ENCODE measurements at regions of chr9 and their contacts with region 1.

Region 1: GRCh38 chr9:91949946-91950664 is at the start of gene ROR2:
- DNase-seq: peak; percentile 96
- H3K4me3 ChIP-seq: peak within 1 kb of the TSS; percentile 35 to 58
- H3K27ac ChIP-seq: peak within 1 kb of the TSS in 1 of 2 experiments; percentile 79; a peak in 1 of 4 replicates
- H3K4me1 ChIP-seq: peaks cover 0 to 15% of the 10 kb centered on the region in 2 experiments; a peak in 2 of 4 replicates
- H3K27me3 ChIP-seq: peaks cover 33% of the 10 kb centered on the region
- CTCF ChIP-seq: peak; percentile 43
- EP300 ChIP-seq: no peak
- RAD21 ChIP-seq: peak; percentile 67
- polyA plus RNA-seq, gene ROR2: 0.34 and 0.43 TPM in 2 replicates

Region 2: DNA sequence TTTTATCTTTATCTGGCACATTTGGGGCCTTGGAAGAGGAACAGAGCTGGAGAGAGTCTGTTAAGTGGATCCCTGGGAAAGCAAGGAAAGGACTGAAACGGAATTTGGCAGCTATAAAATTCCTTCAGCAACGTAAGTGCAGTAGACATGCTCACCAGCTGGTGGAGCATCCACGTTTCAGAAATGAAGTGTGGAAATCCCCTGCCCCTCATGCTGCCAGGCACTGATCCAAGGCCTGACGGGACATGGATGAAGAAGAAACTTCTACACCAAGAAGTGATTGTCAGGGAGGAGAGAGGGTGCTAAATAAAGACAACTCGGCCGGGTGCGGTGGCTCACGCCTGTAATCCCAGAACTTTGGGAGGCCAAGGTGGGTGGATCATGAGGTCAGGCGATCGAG is 209.4 kb before region 1 on chr9:
- CTCF ChIA-PET with region 1: interaction called, 48 read pairs
- POLR2A ChIA-PET with region 1: no interaction called
- DNase-seq: no peak
- H3K4me3 ChIP-seq: no peak overlapping the region
- H3K27ac ChIP-seq: no peak overlapping the region
- H3K4me1 ChIP-seq: peaks cover 0 to 15% of the 10 kb centered on the region in 2 experiments; a peak in 2 of 4 replicates
- H3K27me3 ChIP-seq: peaks cover 10% of the 10 kb centered on the region; the same call in 1 of the 2 replicates
- CTCF ChIP-seq: no peak
- EP300 ChIP-seq: no peak
- RAD21 ChIP-seq: 0 out of 2 replicates have a peak, but pooled peaks have one; percentile 6

Region 3: DNA sequence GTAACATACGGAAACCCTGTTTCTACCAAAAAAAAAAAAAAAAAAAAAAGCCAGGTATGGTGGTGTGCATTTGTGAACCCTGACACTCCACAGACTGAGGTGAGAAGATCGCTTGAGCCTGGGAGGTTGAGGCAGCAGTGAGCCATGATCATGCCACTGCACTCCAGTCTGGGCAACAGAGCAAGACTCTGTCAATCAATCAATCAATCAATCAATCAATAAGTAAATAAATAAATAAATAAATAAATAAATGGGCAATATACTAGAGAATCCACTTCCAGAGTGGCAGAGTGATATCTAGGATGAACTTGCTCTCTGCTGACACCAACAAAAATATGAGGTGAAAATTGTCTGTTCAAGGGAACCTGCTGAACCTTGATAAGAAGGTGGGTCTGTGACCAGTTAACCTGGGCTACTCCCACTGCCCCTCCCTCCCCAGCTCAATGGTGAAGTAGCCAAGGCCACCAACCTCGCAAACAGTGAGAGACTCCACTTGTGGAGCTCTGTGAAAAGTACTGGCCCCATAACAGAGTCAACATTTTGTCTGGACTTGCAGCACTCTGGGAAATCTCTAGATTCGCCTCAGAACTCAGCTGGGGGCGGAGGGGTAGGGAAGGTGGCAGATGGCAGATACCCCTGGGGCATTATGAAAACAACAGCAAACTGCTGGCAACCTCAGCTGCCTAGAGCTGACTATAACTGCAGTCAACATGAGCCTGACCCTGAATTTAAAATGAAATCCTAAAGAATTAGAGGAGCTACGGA is 163.8 kb before region 1 on chr9:
- CTCF ChIA-PET with region 1: interaction called, 495 read pairs
- POLR2A ChIA-PET with region 1: no interaction called
- DNase-seq: no peak
- H3K4me3 ChIP-seq: no peak overlapping the region
- H3K27ac ChIP-seq: no peak overlapping the region
- H3K4me1 ChIP-seq: peaks cover 0 to 3% of the 10 kb centered on the region in 2 experiments; a peak in 1 of 4 replicates
- H3K27me3 ChIP-seq: no peaks in the 10 kb centered on the region
- CTCF ChIP-seq: no peak
- EP300 ChIP-seq: no peak
- RAD21 ChIP-seq: no peak

Region 4: DNA sequence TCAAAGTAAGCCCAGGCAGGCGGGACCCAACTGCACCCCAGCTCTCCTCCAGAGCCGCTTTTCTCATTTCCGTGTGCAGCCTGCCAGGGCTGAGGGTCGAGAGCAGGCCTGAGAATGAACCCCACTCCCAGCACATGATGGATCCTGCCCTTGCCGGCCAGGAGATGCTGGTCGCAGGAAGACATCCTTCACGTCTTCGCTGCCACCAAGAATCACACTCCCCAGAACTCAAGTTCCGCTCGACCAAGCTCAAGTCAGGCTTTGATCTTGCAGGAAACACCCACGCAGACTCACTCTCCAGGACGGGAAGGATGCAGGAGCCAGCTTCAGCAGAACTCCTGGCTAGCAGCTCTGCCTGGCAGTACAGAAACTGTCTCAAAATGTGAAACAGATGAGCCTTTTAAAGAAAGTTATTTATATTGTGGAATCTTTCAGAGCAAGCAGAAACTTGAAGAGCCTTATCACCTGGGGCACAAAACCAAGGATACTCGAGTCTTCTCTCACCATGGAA is 102.5 kb before region 1 on chr9:
- CTCF ChIA-PET with region 1: interaction called, 11 read pairs
- POLR2A ChIA-PET with region 1: no interaction called
- DNase-seq: peak; percentile 44
- H3K4me3 ChIP-seq: no peak overlapping the region
- H3K27ac ChIP-seq: peak overlapping the region in 1 of 2 experiments; percentile 88; a peak in 2 of 4 replicates
- H3K4me1 ChIP-seq: peaks cover 0 to 48% of the 10 kb centered on the region in 2 experiments; a peak in 2 of 4 replicates
- H3K27me3 ChIP-seq: no peaks in the 10 kb centered on the region
- CTCF ChIP-seq: no peak
- EP300 ChIP-seq: no peak
- RAD21 ChIP-seq: no peak

Region 5: GRCh38 chr9:91966503-91966902 is 16.4 kb after region 1 on chr9:
- CTCF ChIA-PET with region 1: interaction called, 35 read pairs
- POLR2A ChIA-PET with region 1: no interaction called
- DNase-seq: no peak
- H3K4me3 ChIP-seq: no peak overlapping the region
- H3K27ac ChIP-seq: no peak overlapping the region
- H3K4me1 ChIP-seq: no peaks in the 10 kb centered on the region
- H3K27me3 ChIP-seq: no peaks in the 10 kb centered on the region
- CTCF ChIP-seq: no peak
- EP300 ChIP-seq: no peak
- RAD21 ChIP-seq: no peak

Region 6: GRCh38 chr9:92191801-92192200 is 241.7 kb after region 1 on chr9:
- CTCF ChIA-PET with region 1: no interaction called
- POLR2A ChIA-PET with region 1: no interaction called
- DNase-seq: peak; percentile 47
- H3K4me3 ChIP-seq: no peak overlapping the region
- H3K27ac ChIP-seq: no peak overlapping the region
- H3K4me1 ChIP-seq: no peaks in the 10 kb centered on the region; a peak in 1 of 4 replicates
- H3K27me3 ChIP-seq: no peaks in the 10 kb centered on the region
- CTCF ChIP-seq: no peak
- EP300 ChIP-seq: no peak
- RAD21 ChIP-seq: no peak